ENCODE measurements at regions of chr4 and their contacts with region 1.

Region 1: GRCh38 chr4:184474263-184475095 is at the start of gene IRF2:
- DNase-seq: peak; percentile 98
- ATAC-seq: peak; percentile 82
- H3K4me3 ChIP-seq: peak within 1 kb of the TSS; percentile 92 to 100 (median 97)
- H3K4me3 Mint-ChIP-seq: peak within 1 kb of the TSS; percentile 96
- H3K27ac ChIP-seq: peak within 1 kb of the TSS; percentile 91 to 96
- H3K27ac Mint-ChIP-seq: peak within 1 kb of the TSS; percentile 95
- H3K4me1 ChIP-seq: peaks cover 53 to 54% of the 10 kb centered on the region in 2 donors
- H3K4me1 Mint-ChIP-seq: peaks cover 66% of the 10 kb centered on the region
- H3K27me3 ChIP-seq: no peaks in the 10 kb centered on the region
- H3K27me3 Mint-ChIP-seq: no peaks in the 10 kb centered on the region
- CTCF ChIP-seq: no peak
- total RNA-seq, gene IRF2: 68.2 and 68.4 TPM in 2 replicates

Region 2: GRCh38 chr4:184282251-184282713 is 192.2 kb before region 1 on chr4:
- CTCF ChIA-PET with region 1: interaction called, 3 read pairs
- POLR2A ChIA-PET with region 1: interaction called, 3 read pairs
- intact Hi-C with region 1: loop called (anchors 1 kb)
- DNase-seq: peak; percentile 62
- ATAC-seq: peak; percentile 72
- H3K4me3 ChIP-seq: no peak overlapping the region
- H3K4me3 Mint-ChIP-seq: peak overlapping the region; percentile 77
- H3K27ac ChIP-seq: peak overlapping the region; percentile 28 to 73
- H3K27ac Mint-ChIP-seq: peak overlapping the region; percentile 90
- H3K4me1 ChIP-seq: peaks cover 48% of the 10 kb centered on the region in 2 donors
- H3K4me1 Mint-ChIP-seq: peaks cover 58% of the 10 kb centered on the region
- H3K27me3 ChIP-seq: no peaks in the 10 kb centered on the region
- H3K27me3 Mint-ChIP-seq: no peaks in the 10 kb centered on the region
- CTCF ChIP-seq: peak; percentile 34

Region 3: DNA sequence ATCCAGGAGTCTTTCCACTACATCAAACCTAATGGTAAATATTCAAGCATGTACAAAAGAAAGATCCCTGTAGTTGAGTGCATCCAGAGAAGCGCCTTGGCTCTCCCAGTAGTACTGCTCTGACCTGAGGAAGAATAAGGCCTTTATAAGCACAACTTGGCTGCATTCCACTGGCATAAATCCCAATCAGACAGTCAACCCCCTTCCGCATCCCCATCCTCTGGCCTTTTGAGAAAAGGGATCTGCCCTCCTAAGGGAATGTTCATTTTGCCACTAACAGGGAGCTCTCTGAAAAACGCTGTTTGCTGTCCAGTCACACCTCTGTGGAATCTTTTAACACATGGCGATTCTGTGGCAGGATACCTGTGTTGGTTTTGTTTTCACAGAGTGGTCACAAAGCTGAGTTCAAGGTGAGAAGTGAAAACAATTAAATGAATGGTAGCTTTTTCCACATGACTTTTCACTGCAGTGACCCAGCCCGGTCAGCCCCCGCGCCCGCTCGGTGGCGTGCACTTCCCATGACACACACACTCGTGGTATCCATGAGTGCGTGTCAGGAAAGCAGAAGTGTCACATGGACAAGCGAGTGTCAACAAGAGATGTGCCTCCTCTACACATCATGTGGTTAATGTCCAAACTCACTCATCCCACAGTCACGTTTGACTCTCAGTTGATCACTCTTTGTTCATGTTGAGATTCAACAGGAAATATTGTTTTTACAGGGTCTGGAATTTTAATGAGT is 144.6 kb before region 1 on chr4:
- CTCF ChIA-PET with region 1: interaction called, 3 read pairs
- POLR2A ChIA-PET with region 1: interaction called, 10 read pairs
- intact Hi-C with region 1: loop called (anchors 5 kb)
- DNase-seq: peak; percentile 89
- ATAC-seq: peak; percentile 28
- H3K4me3 ChIP-seq: no peak overlapping the region
- H3K4me3 Mint-ChIP-seq: peak overlapping the region; percentile 75
- H3K27ac ChIP-seq: peak overlapping the region; percentile 89 to 91
- H3K27ac Mint-ChIP-seq: peak overlapping the region; percentile 96
- H3K4me1 ChIP-seq: peaks cover 63 to 65% of the 10 kb centered on the region in 2 donors
- H3K4me1 Mint-ChIP-seq: peaks cover 67% of the 10 kb centered on the region
- H3K27me3 ChIP-seq: no peaks in the 10 kb centered on the region
- H3K27me3 Mint-ChIP-seq: no peaks in the 10 kb centered on the region
- CTCF ChIP-seq: no peak

Region 4: GRCh38 chr4:184417802-184418511 is 56.5 kb before region 1 on chr4:
- CTCF ChIA-PET with region 1: no interaction called
- POLR2A ChIA-PET with region 1: interaction called, 4 read pairs
- intact Hi-C with region 1: loop called (anchors 1 kb)
- DNase-seq: peak; percentile 16
- ATAC-seq: peak; percentile 43
- H3K4me3 ChIP-seq: peak overlapping the region in 2 of 5 experiments; percentile 12 to 55
- H3K4me3 Mint-ChIP-seq: peak overlapping the region; percentile 48
- H3K27ac ChIP-seq: peak overlapping the region; percentile 79 to 84
- H3K27ac Mint-ChIP-seq: peak overlapping the region; percentile 91
- H3K4me1 ChIP-seq: peaks cover 45 to 57% of the 10 kb centered on the region in 2 donors
- H3K4me1 Mint-ChIP-seq: peaks cover 78% of the 10 kb centered on the region
- H3K27me3 ChIP-seq: no peaks in the 10 kb centered on the region
- H3K27me3 Mint-ChIP-seq: no peaks in the 10 kb centered on the region
- CTCF ChIP-seq: no peak

Region 5: DNA sequence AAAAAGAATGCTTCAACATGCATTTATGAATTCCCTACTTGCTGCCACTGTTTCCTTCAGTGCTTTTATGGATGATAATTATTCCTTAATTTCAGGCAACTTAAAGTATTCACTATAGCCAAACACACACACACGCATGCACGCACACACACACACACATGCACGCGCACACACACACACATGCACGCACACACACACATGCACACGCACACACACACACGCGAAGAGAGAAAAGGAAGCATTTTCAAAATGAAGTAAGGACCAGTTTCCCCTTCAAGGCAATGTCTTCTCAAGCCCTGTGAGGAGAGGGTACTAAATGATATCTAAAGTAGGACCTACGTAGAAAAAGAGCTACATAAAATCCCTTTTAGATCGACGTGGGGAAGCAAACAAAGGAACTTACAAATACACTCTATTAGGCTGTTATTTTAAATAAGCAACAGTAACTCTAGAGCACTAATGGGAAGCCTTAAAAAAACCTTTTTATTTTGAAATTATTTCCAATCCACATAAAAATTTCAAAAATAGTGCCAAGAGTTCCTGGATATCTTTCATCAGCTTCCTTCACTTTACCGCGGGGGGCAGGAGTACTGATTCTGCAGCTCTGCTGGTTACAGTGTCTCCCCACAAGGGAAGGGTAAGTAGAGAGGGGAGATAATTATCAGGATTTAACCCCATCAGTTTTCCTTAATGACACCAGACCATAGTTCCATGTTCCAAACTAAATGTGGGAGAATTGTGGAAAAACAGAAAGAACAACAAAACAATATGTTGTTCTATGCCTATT is 13.8 kb before region 1 on chr4:
- CTCF ChIA-PET with region 1: interaction called, 4 read pairs
- POLR2A ChIA-PET with region 1: no interaction called
- intact Hi-C with region 1: loop called (anchors 1 kb)
- DNase-seq: peak; percentile 49
- ATAC-seq: no peak
- H3K4me3 ChIP-seq: peak overlapping the region in 2 of 5 experiments; percentile 10 to 28
- H3K4me3 Mint-ChIP-seq: peak overlapping the region; percentile 73
- H3K27ac ChIP-seq: peak overlapping the region; percentile 2 to 77
- H3K27ac Mint-ChIP-seq: peak overlapping the region; percentile 86
- H3K4me1 ChIP-seq: peaks cover 69 to 81% of the 10 kb centered on the region in 2 donors
- H3K4me1 Mint-ChIP-seq: peaks cover 92% of the 10 kb centered on the region
- H3K27me3 ChIP-seq: no peaks in the 10 kb centered on the region
- H3K27me3 Mint-ChIP-seq: no peaks in the 10 kb centered on the region
- CTCF ChIP-seq: no peak

Region 6: GRCh38 chr4:184538023-184538599 is 63.6 kb after region 1 on chr4:
- CTCF ChIA-PET with region 1: interaction called, 5 read pairs
- POLR2A ChIA-PET with region 1: interaction called, 14 read pairs
- intact Hi-C with region 1: loop called (anchors 1 kb)
- DNase-seq: peak; percentile 90
- ATAC-seq: peak; percentile 71
- H3K4me3 ChIP-seq: peak overlapping the region; percentile 74 to 98 (median 81)
- H3K4me3 Mint-ChIP-seq: peak overlapping the region; percentile 96
- H3K27ac ChIP-seq: peak overlapping the region; percentile 98
- H3K27ac Mint-ChIP-seq: peak overlapping the region; percentile 100
- H3K4me1 ChIP-seq: peaks cover 33 to 38% of the 10 kb centered on the region in 2 donors
- H3K4me1 Mint-ChIP-seq: peaks cover 42% of the 10 kb centered on the region
- H3K27me3 ChIP-seq: no peaks in the 10 kb centered on the region
- H3K27me3 Mint-ChIP-seq: no peaks in the 10 kb centered on the region
- CTCF ChIP-seq: peak; percentile 61

Region 7: DNA sequence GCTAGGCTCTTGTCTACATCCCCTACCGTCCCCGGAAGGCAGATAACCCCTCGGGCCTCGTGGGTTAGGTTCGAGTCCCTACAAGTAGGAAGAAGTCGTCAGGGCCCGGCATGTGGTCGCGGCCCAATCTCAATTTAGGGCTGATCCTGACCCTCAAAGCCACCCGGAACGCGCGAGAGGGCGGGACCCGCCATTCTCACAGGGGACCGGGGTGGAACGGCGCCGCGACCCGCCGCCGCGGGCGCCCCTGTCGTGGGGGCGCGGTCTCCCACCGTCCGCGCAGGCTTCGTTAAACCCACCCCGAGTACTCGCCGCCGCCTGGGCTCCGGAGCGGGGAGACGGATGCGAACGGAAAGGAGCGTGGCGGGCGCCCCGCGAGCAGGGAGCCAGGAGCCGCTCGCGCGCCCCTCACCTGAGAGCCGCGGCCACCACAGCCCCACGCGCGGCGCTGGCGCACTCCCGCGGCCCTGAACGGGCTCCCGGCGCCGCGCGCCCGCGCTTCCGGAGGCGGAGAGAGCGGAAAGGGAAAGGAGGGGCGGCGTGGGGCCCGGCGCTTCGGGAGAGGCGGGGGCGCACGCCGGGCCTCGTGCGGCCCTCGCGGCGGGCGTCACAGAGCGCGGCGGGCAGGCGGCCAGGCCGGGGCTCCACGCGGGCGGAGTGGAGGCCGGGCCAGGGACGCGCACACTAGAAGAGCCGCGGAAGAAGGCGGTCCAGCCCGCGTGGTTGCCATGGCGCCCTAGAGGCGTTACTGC is 729.2 kb after region 1 on chr4 and contains the start of gene CFAP97:
- CTCF ChIA-PET with region 1: no interaction called
- POLR2A ChIA-PET with region 1: no interaction called
- intact Hi-C with region 1: loop called (anchors 5 kb)
- DNase-seq: peak; percentile 90
- ATAC-seq: peak; percentile 81
- H3K4me3 ChIP-seq: peak within 1 kb of the TSS; percentile 58 to 73 (median 71)
- H3K4me3 Mint-ChIP-seq: peak within 1 kb of the TSS; percentile 97
- H3K27ac ChIP-seq: peak within 1 kb of the TSS; percentile 76 to 90
- H3K27ac Mint-ChIP-seq: peak within 1 kb of the TSS; percentile 98
- H3K4me1 ChIP-seq: peaks cover 31 to 45% of the 10 kb centered on the region in 2 donors
- H3K4me1 Mint-ChIP-seq: peaks cover 45% of the 10 kb centered on the region
- H3K27me3 ChIP-seq: no peaks in the 10 kb centered on the region
- H3K27me3 Mint-ChIP-seq: no peaks in the 10 kb centered on the region
- CTCF ChIP-seq: peak; percentile 10
- total RNA-seq, gene CFAP97: 32.0 and 32.4 TPM in 2 replicates

Measured in B cell (primary cell).